CD8-positive, alpha-beta memory T cell (primary cell): ENCODE measurements at regions of chr4 and their contacts with region 1.

Region 1: DNA sequence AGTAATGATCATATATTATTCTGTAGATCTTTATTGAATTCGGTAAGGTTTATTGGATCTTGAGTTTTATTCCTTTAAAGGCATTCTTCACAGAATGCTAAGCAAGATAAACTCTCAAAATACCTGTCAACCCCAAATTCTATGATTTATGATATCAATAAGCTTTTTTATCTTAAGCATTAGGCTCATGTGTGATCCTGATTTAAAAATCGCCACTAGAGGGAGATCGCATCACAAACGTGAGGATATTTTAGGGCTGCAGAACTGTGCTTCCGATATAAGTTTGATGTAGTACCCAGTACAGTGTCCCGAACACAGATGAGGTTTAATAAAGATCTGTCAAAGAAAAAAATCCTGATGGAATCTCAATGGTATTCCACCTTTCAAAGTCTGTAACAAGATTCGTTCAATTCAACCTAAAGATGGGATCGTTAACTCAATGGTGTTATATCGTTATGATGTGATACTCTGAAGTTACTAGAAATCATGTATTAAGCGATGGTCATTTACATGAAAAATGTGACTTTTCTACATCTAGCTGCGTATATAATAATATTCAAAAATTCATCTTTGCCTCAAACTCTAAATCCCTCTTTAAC is 169.0 kb downstream of the CORIN start:
- DNase-seq: peak in 2 of 5 donors; percentile 5 to 20
- H3K4me3 ChIP-seq: no peak overlapping the region
- H3K4me3 Mint-ChIP-seq: no peak overlapping the region
- H3K27ac ChIP-seq: no peak overlapping the region
- H3K27ac Mint-ChIP-seq: no peak overlapping the region
- H3K4me1 ChIP-seq: no peaks in the 10 kb centered on the region
- H3K4me1 Mint-ChIP-seq: no peaks in the 10 kb centered on the region
- H3K27me3 ChIP-seq: no peaks in the 10 kb centered on the region
- H3K27me3 Mint-ChIP-seq: peaks cover 4 to 38% of the 10 kb centered on the region in 2 donors

Region 2: DNA sequence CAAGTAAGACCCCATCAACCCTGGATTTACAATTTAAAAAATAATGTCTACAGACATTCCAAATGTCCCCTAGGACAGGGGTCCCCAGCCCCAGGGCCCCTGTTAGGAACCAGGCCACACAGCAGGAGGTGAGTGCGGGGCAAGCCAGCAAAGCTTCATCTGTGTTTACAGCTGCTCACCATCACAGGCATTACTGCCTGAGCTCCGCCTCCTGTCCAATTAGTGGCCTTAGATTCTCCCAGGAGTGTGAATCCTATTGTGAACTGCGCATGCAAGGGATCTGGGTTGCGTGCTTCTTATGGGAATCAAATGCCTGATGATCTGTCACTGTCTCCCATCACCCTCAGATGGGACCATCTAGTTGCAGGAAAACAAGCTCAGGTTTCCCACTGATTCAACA is 37.7 kb before region 1 on chr4:
- CTCF ChIA-PET with region 1: no interaction called
- POLR2A ChIA-PET with region 1: no interaction called
- DNase-seq: no peak
- H3K4me3 ChIP-seq: no peak overlapping the region
- H3K4me3 Mint-ChIP-seq: no peak overlapping the region
- H3K27ac ChIP-seq: no peak overlapping the region
- H3K27ac Mint-ChIP-seq: no peak overlapping the region
- H3K4me1 ChIP-seq: no peaks in the 10 kb centered on the region
- H3K4me1 Mint-ChIP-seq: no peaks in the 10 kb centered on the region
- H3K27me3 ChIP-seq: no peaks in the 10 kb centered on the region
- H3K27me3 Mint-ChIP-seq: peaks cover 5 to 13% of the 10 kb centered on the region in 2 donors

Region 3: GRCh38 chr4:47933840-47934239 is 264.9 kb after region 1 on chr4:
- CTCF ChIA-PET with region 1: interaction called, 18 read pairs
- POLR2A ChIA-PET with region 1: no interaction called
- DNase-seq: peak in 2 of 5 donors; percentile 30 to 45
- H3K4me3 ChIP-seq: no peak overlapping the region
- H3K4me3 Mint-ChIP-seq: no peak overlapping the region
- H3K27ac ChIP-seq: no peak overlapping the region
- H3K27ac Mint-ChIP-seq: no peak overlapping the region
- H3K4me1 ChIP-seq: no peaks in the 10 kb centered on the region
- H3K4me1 Mint-ChIP-seq: no peaks in the 10 kb centered on the region
- H3K27me3 ChIP-seq: no peaks in the 10 kb centered on the region
- H3K27me3 Mint-ChIP-seq: peaks cover 4 to 12% of the 10 kb centered on the region in 2 donors